ENCODE measurements at regions of chr17 and their contacts with region 1.

Region 1: GRCh38 chr17:28644985-28645939 is at the start of gene BLTP2:
- DNase-seq: peak; percentile 50
- H3K4me3 ChIP-seq: peak within 1 kb of the TSS; percentile 93
- CTCF ChIP-seq: no peak

Region 2: DNA sequence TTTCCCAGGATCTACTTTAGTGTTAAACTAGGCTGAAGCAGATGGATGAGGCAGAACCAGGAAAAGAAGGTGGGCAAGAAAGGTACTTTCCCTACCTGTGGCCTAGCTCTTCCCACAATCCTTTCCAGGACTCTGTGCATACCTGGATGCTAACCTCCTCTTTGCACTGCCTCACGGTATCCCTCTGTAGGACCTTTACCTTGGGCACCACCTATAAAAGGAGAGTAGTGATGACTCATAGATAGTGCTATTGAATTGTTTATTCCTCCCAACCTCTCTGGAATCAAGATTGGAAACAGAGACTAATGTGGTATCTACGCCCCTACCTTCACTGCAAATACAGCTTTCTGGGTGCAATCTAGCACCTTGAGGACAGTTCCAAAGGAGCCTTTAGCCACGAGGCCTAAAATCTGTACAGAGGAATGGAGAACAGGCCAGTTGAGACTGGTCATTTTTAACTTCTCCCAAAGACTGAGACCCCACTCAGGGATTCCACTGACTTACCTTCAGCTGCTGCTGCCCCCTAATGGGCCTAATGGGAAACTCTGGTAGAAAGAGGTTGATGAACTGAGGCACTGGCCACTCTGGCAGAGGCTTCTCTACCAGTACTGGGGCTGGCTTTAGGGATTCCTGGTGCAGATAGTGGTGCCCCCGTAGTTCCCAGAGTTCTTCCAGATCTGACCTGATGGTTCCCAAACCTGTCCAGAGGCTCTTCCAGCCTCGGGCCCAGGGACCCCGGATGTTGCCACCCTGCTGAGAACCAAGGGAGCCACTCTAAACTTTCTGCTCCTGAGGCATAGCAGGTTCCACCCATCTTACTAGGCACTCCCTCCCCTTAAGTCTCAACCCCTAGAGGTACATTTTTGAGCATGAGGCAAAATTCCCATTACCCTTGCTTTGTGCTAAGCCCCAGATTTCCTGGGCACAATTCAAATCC is 32.1 kb before region 1 on chr17:
- CTCF ChIA-PET with region 1: interaction called, 37 read pairs
- POLR2A ChIA-PET with region 1: no interaction called
- DNase-seq: no peak
- H3K4me3 ChIP-seq: no peak overlapping the region
- CTCF ChIP-seq: peak; percentile 69

Region 3: GRCh38 chr17:28623696-28624095 is 21.6 kb before region 1 on chr17:
- CTCF ChIA-PET with region 1: interaction called, 85 read pairs
- POLR2A ChIA-PET with region 1: no interaction called
- DNase-seq: no peak
- H3K4me3 ChIP-seq: no peak overlapping the region
- CTCF ChIP-seq: no peak

Region 4: DNA sequence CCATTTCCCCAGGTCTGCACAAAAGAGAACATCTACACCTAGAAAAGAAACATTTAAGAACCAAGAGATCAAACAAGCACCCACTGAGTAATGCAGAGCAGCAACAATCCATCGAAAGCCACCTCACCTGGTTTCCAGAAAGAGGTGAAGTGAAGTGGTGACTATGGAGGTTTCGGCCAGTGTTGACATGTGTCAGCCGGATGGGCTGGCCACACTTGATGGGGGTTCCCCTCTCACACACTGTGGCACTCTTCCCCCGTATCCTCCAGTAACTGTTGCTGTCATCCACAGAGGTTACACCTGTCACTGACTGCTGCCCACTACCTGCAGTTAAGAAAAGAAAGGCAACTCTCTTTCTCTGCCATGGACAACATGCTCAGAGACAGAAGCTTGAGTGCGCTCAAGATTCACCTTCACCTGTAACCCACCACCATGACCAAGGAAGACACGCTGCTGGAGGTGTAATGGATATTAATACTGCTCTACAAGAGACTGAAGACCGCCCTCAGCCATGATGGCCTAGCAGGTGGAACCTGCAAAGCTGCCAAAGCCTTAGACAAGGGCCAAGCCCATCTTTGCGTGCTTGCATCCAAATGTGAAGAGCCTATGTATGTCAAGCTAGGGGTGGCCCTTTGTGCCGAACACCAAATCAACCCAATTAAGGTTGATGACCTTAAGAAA is 10.0 kb after region 1 on chr17:
- CTCF ChIA-PET with region 1: interaction called, 63 read pairs
- POLR2A ChIA-PET with region 1: interaction called, 4 read pairs
- DNase-seq: no peak
- H3K4me3 ChIP-seq: no peak overlapping the region
- CTCF ChIP-seq: no peak

Region 5: DNA sequence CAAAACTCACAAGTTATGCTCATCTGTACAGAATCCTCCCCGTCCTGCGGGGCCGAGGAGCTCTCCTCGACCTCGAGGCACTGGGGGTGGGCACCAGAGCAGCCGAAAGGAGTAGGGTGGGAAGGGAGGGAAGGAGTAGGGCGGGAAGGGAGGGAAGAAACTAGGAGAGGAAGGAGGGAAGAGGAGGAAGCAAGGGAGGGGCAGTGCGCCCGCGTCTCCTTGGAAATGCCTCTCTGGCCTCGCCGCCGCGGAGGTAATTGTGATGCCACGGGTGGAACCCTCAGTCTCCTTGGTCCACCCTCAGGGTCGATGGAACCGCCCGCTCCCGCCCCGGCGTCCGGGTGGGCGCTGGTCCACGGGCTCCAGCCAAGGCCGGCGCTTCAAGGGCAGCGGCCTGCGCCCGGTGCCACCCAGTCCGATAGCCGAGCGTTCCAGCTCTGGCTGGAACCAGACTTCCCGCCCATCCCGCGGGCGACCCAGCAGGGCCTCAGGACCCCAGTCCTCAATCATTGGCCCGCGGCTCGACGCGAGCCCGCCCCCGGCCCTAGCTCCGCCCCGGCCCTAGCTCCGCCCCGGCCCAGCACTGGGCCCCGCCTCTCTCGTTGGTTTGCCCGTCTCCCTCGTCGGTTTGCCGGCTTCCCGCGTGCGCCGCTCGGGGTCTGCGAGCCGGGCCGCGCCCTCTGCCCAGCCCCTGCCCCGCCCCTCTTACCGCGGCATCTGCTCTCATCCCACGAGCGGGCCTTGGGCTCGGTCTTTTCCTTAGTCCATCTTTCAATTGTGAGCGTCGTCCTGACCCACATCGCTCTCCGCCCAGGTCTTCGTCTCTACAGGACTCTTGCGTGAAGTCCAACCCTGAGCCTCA is 65.8 kb after region 1 on chr17:
- CTCF ChIA-PET with region 1: interaction called, 11 read pairs
- POLR2A ChIA-PET with region 1: no interaction called
- DNase-seq: no peak
- H3K4me3 ChIP-seq: peak overlapping the region; percentile 65
- CTCF ChIP-seq: no peak